Breast epithelium (tissue), 4 donors: ENCODE measurements at regions of chr1 and their contacts with region 1.

Region 1: DNA sequence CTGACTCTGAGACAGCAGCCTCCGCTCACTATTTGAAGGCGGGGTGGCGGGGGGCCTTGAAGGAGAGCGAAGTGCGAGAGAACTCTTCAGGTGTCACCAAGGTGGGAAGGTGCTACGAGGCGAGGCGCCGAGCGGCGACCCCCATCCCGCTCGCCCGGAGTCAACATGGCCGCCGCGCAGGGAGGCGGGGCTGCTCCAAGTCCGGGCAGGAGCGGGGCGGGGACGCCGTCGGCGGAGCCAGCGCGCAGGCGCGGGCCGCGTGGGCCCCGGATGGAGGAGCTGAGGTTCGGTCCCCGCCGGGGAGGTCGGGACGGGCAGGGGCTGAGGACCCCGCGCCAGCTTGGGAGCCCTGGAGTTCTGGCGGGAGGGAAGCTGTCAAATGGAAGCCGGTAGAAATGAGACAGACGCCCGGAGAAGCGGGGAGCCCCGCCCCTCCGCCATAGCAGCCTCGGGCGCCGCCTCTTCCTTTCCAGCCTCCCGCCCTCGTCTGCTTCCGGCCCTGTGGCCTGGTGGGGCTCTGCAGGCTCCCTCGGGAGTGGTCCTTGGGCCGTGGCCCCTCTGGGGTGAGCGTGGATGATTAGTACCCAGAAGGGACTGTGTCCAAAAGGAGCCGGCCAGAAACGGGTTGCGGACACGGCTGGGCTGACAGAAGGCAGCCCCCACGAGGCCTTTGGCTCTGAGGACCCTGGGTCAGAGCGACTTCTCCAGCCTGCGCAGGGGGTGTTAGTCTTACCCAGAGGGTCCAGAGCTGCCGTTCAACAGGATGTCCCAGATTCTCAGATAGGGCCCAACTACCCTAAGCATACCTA is at the start of gene PIGV:
- DNase-seq: peak; percentile 84 to 87
- H3K4me3 ChIP-seq: peak within 1 kb of the TSS; percentile 62 to 79 (median 74)
- H3K27ac ChIP-seq: peak within 1 kb of the TSS; percentile 98 to 99
- H3K4me1 ChIP-seq: peaks cover 7 to 8% of the 10 kb centered on the region in 2 donors
- H3K27me3 ChIP-seq: no peaks in the 10 kb centered on the region
- CTCF ChIP-seq: peak; percentile 45 to 65 (median 49)
- POLR2A ChIP-seq: peak; percentile 37
- total RNA-seq, gene PIGV: 18.7 to 36.8 (median 29.7) TPM

Region 2: DNA sequence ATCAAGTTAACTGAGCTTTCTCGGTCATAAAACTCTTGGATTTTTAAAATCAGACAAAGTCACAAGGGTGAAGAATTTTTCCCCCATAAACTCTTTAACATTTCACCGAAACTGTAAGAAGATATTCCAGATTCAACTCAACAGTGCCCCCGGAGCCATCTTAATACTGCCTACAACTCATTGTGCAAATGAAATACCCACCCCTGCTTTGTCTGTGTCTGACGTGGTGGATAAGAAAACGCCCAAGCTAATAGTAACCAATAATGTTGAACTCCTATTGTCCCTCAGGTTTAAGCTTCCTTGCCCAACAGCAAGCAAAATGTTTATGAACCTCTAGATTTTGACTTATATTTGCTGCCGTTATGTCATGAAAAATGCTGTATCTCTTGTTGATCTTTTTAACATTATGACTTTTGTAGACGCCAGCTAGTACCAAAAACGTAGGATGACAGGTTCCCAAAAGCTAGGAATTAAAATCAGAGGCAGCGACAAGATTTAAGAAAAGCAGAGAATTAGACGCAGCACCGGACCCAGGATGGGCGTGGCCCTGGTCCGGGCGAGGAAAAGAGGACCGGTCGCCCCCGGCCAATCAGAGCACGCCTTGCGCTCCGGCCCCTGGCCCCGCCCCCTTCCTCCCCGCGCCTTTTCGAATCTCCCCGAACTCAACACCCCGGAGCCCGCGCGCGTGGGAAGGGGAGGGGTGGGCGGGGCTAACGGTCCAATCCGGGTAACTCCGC is 882.8 kb before region 1 on chr1:
- intact Hi-C with region 1: no loop called
- DNase-seq: peak; percentile 92 to 93
- H3K4me3 ChIP-seq: peak overlapping the region; percentile 62 to 82 (median 73)
- H3K27ac ChIP-seq: no peak overlapping the region
- H3K4me1 ChIP-seq: peaks cover 0 to 4% of the 10 kb centered on the region in 2 donors
- H3K27me3 ChIP-seq: no peaks in the 10 kb centered on the region
- CTCF ChIP-seq: no peak
- POLR2A ChIP-seq: no peak

Region 3: GRCh38 chr1:26225033-26225831 is 562.7 kb before region 1 on chr1:
- intact Hi-C with region 1: no loop called
- DNase-seq: peak; percentile 32 to 59
- H3K4me3 ChIP-seq: peak overlapping the region; percentile 19 to 59 (median 48)
- H3K27ac ChIP-seq: no peak overlapping the region
- H3K4me1 ChIP-seq: no peaks in the 10 kb centered on the region
- H3K27me3 ChIP-seq: no peaks in the 10 kb centered on the region
- CTCF ChIP-seq: no peak
- POLR2A ChIP-seq: no peak

Region 4: DNA sequence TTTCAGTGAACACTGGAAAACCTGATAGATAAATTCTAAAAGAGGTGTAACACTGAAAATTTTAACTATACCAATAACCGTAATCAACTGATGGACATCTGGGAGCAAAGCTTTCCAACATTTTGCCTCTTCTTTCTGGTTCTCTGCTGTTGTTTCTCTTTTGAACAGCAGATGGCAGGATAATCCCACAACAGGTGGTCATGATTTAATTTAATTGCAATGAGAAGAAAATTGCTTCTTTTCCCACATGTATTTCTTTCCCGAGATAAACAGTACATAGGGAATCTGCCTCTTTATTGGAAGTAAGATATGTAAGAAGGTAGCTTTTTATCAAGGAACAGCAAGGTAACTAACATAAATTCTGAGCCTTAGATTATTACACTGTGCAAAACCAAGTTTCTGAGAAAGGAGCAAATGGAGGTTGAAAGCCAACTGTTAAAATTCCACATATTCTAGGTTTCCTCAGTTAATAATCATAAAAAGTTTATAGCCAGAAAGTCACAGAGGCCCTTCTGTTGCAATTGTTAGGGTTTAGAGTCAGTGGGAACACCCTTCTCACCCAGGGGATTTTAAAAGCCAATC is 185.4 kb before region 1 on chr1:
- intact Hi-C with region 1: loop called (anchors 2 kb)
- DNase-seq: no peak
- H3K4me3 ChIP-seq: no peak overlapping the region
- H3K27ac ChIP-seq: no peak overlapping the region
- H3K4me1 ChIP-seq: no peaks in the 10 kb centered on the region
- H3K27me3 ChIP-seq: no peaks in the 10 kb centered on the region
- CTCF ChIP-seq: peak; percentile 94 to 96 (median 96)
- POLR2A ChIP-seq: no peak

Region 5: DNA sequence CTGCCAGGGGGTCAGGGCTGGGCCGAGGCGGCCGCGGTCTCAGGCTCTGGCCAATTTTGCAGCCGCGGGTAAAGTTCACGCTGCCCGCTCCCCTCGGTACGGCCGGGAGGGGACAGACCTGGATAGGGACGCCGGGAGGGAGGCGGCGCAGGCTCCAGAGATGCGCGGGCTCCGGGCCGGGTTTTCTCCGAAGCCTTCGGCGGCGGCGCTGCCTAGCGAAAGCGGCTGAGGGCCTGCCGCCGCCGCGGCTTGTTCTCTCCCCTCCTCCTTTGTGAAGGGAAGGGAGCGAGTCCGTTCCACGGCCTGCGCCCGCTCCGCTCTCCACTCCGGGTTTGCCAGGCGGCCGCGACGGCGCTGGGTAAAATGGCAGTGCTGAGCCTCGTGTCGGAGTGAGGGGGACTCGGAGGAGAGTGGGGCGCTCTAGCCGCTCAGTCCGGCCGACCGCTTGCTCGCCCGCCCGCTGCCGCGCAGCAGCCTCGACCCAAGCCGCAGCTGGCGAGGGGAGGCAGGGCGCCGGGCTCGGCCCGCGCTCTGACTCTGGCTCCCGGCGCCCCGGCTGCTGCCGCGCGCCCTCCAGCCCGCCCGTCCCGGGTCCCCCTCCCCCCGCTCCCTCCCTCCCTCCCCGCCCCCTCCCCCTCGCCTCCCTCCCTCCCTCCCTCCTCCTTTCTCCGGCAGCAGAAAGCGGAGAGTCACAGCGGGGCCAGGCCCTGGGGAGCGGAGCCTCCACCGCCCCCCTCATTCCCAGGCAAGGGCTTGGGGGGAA is 92.4 kb before region 1 on chr1 and contains the start of gene ARID1A:
- intact Hi-C with region 1: loop called (anchors 5 kb)
- DNase-seq: peak; percentile 95
- H3K4me3 ChIP-seq: peak within 1 kb of the TSS; percentile 89 to 95 (median 93)
- H3K27ac ChIP-seq: peak within 1 kb of the TSS; percentile 98 to 99
- H3K4me1 ChIP-seq: peaks cover 20 to 21% of the 10 kb centered on the region in 2 donors
- H3K27me3 ChIP-seq: no peaks in the 10 kb centered on the region
- CTCF ChIP-seq: peak in 1 of 3 donors; percentile 23
- POLR2A ChIP-seq: peak; percentile 78
- total RNA-seq, gene ARID1A: 32.8 to 41.9 (median 35.4) TPM

Region 6: GRCh38 chr1:26744075-26744959 is 43.6 kb before region 1 on chr1:
- intact Hi-C with region 1: no loop called
- DNase-seq: peak in 1 of 2 donors; percentile 60
- H3K4me3 ChIP-seq: no peak overlapping the region
- H3K27ac ChIP-seq: peak overlapping the region; percentile 57 to 63
- H3K4me1 ChIP-seq: peaks cover 0 to 4% of the 10 kb centered on the region in 2 donors
- H3K27me3 ChIP-seq: no peaks in the 10 kb centered on the region
- CTCF ChIP-seq: no peak
- POLR2A ChIP-seq: no peak